Activated naive CD4-positive, alpha-beta T cell treated with anti-CD3 and anti-CD28 coated beads for 36 hours (primary cell): ENCODE measurements at regions of chr11 and their contacts with region 1.

Region 1: DNA sequence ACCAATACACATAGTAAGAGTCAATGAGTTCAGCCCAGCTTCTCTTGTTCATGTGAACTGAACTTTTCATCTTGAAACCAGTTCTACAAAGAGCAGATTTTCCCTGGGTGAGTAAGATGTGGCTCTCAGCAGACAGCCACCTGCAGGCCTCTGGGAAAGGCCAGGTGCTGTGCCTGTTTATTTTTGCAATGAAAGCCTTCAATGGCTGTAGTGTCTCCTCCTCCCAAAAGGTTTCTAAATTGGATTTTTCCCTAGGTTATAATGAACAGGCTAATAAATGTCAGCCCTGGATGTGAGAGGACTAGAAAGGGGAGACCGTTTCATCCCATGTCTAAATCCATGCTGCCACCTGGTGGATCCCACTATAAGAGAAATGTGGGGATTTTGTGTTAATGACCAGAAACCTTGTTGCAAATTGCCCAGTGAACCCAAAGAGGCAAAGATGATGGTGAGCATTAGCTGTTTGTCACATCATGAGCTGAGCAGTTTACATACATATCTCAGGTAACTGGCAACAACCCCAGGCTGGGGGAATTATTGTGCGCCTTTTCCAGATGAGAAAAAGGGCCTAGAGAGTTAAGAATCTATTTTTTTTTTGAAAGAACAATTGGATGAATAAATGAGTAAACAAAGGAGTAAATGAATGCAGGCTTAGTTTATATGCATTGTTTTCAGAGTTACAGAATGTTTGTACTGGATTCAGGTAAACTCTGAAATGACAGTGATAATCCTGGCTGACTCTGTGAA is 12.7 kb downstream of the C11orf91 start:
- DNase-seq: peak; percentile 36
- H3K4me3 Mint-ChIP-seq: no peak overlapping the region
- H3K27ac Mint-ChIP-seq: no peak overlapping the region
- H3K4me1 Mint-ChIP-seq: peaks cover 3% of the 10 kb centered on the region
- H3K27me3 Mint-ChIP-seq: peaks cover 12% of the 10 kb centered on the region

Region 2: DNA sequence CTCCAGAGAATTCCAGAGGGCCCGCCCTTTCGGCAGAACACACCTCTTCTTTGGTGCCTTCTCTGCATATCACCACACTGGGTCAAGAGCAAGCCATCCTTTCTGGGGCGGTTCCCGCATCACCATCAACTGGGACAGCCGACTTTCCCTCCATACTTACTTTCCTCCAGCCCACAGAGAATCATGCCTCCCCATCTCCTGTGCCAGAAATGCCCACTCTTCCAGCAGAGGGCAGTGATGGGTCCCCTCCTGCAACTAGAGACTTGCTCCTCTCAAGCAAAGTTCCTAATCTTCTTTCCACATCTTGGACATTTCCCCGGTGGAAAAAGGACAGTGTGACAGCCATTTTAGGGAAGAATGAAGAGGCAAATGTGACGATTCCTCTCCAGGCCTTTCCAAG is 145.0 kb before region 1 on chr11:
- CTCF ChIA-PET with region 1: interaction called, 6 read pairs
- intact Hi-C with region 1: loop called (anchors 5 kb)
- DNase-seq: peak; percentile 62
- H3K4me3 Mint-ChIP-seq: no peak overlapping the region
- H3K27ac Mint-ChIP-seq: no peak overlapping the region
- H3K4me1 Mint-ChIP-seq: no peaks in the 10 kb centered on the region
- H3K27me3 Mint-ChIP-seq: peaks cover 23% of the 10 kb centered on the region

Region 3: DNA sequence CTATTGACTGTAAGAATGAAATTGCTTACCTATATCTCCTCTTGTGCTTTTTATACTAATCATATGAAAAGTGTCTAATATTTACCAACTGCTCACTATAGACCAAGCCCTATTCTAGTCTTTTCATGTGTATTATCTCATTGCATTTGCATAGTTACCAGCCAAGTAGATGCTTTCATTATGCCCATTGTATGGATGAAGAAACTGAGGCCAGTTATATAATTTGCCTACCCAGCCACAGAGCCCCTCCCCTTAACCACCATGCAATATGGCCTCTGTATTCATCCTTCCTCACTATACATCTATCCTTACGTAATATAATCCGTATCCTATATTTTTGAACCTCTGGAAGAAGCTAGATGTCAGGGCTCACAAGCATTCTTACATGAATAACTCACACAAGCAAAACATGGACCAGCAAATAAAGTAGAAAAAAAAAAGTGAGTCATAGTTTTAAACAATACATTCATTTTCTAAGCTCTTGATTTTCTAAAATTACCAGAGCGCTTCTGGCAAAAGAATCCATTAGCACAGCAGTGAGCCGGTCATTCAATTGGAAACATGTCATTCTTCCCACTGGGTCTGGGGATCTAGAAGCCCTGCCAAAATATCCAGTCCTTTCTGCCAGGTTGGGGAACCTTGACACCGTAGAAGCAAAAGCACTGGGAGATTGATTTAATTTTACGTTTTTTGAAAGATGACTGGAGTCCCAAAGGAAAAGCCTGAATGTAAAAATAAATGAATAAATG is 67.3 kb before region 1 on chr11:
- CTCF ChIA-PET with region 1: no interaction called
- intact Hi-C with region 1: loop called (anchors 5 kb)
- DNase-seq: no peak
- H3K4me3 Mint-ChIP-seq: no peak overlapping the region
- H3K27ac Mint-ChIP-seq: no peak overlapping the region
- H3K4me1 Mint-ChIP-seq: peaks cover 3% of the 10 kb centered on the region
- H3K27me3 Mint-ChIP-seq: peaks cover 11% of the 10 kb centered on the region